Motor neuron (in vitro differentiated cells): ENCODE measurements at regions of chr5 and their contacts with region 1.

Region 1: DNA sequence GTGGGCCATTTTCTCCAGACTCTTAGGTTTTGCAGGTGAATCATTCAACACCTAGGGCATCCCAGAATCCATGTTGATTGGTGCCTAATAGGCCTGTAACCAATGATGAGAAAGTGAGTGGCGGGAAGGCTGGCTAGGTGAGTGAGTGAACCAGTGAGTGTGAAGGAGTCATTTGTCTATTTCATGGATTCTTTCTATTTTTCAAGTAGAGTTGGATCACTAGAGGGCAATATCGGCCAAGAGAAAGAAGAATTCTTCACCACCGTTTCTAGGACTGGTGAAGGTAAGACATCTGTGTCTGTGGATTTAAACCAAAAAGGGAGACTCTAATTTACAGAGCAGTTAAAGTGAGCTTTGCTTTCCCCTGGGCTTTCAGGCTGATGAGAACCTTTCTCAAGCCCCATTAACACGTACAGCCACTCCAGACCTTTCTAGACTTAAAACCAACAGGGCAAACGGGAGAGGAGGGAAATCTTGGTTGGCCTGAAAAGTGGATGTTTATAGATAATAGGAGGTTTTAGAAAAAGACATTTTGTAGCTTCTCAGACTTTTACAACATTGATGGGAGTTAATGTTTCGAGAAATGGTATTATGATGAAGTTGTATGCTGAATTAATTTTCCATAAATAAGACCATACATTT is 114.3 kb upstream of the IL12B start:
- ATAC-seq: peak; percentile 45 to 73 (median 56)
- H3K4me3 ChIP-seq: no peak overlapping the region
- H3K27ac ChIP-seq: no peak overlapping the region
- H3K4me1 ChIP-seq: peaks cover 6% of the 10 kb centered on the region in 2 donors

Region 2: DNA sequence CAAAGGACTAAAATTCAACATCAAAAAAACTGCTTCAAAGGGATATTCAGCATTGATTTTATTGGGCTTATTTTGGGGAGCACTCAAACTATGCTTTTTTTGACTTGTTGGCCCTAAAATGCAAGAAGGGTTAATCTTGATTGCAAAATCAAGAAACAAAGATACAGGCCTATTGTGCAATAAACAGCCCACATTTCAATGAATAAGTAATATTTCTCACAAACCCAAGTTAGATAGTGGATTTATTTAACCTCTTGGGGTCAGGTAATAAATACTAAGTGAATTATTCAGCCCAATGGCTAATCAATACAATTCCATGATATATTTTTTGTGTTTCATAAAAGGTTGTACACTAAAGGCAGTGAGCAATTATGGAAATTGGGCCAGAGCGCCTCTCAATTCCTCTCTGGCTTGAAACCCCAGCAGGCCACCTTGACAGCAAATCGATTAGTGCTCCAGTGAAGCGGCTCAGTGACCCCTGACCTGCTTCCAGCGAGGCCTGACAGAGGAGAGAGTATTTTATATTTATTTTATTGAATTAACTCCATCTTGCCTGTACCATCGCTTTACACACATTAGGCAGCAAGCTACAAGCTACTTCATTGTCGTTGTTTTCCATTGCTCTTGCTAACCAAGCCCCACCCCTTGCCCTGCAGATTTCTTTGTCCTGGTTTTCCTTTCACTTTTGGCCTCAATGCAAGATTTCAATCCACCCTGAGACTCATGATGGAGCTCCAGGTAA is 410.3 kb before region 1 on chr5:
- in situ Hi-C with region 1: no loop called
- ATAC-seq: peak in 7 of 8 experiments; percentile 45 to 96 (median 93)
- H3K4me3 ChIP-seq: no peak overlapping the region
- H3K27ac ChIP-seq: peak overlapping the region; percentile 45 to 85
- H3K4me1 ChIP-seq: peaks cover 38 to 43% of the 10 kb centered on the region in 2 donors

Region 3: DNA sequence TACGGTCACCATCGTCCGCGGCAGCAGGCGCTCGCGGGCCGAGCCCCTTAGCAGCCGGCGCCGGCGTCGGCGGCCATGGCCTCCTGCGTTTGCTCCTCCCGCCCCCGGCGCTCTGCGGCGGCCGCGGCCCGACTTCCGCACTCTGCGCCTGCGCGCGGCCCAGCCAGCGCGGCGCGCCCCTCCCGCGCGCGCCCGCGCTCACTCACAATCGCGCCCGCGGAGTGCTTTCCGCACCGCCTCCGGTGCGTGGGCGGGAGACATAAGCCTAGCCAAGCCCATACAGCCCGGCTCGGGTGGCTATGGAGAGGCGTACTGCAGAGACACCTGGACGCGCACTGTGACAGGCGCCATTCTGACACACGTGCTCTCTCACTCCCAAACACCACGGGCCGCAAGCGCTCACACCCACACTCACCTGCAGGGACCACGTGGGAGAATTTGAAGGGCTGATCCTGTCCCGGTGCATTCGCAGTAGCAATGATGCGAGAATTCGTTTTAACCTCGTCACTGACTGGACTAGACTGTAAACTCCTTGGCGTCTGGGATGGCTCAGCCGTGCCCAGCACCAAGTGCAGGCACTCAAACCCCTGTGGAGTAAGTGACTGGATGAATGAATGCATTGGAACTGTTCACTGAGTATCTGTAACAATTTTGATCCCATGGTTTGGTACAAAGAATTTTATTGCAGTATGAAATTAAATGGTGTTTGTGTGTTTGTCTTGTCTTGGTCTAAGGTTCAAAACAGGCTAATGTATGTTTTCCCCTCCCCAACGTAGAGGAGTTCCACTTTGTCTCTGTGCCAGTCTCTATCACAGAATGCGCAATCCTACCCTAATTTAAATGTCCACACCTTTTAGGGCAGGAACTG is 234.9 kb before region 1 on chr5 and contains the start of gene RNF145:
- in situ Hi-C with region 1: no loop called
- ATAC-seq: peak; percentile 64 to 86 (median 80)
- H3K4me3 ChIP-seq: peak within 1 kb of the TSS; percentile 78 to 96 (median 95)
- H3K27ac ChIP-seq: peak within 1 kb of the TSS; percentile 91 to 93
- H3K4me1 ChIP-seq: peaks cover 5 to 25% of the 10 kb centered on the region in 2 donors
- total RNA-seq, gene RNF145: 41.0 to 88.5 (median 49.1) TPM

Region 4: GRCh38 chr5:159915904-159916840 is 471.6 kb after region 1 on chr5 and contains the start of gene ADRA1B:
- in situ Hi-C with region 1: loop called in 1 of 9 experiments (anchors 10 kb)
- ATAC-seq: peak; percentile 87 to 98 (median 94)
- H3K4me3 ChIP-seq: peak within 1 kb of the TSS; percentile 33 to 46 (median 44)
- H3K27ac ChIP-seq: no peak within 1 kb of the TSS
- H3K4me1 ChIP-seq: peaks cover 16 to 36% of the 10 kb centered on the region in 2 donors
- total RNA-seq, gene ADRA1B: 0.25 to 4.8 (median 0.57) TPM in 7 of 8 experiments, not detected in the other

Region 5: GRCh38 chr5:159965031-159965837 is 520.7 kb after region 1 on chr5:
- in situ Hi-C with region 1: loop called in 1 of 9 experiments (anchors 25 kb)
- ATAC-seq: peak; percentile 40 to 94 (median 62)
- H3K4me3 ChIP-seq: no peak overlapping the region
- H3K27ac ChIP-seq: no peak overlapping the region
- H3K4me1 ChIP-seq: no peaks in the 10 kb centered on the region

Region 6: GRCh38 chr5:159987031-159987674 is 542.6 kb after region 1 on chr5:
- in situ Hi-C with region 1: loop called in 5 of 9 experiments (anchors 10 to 25 kb)
- ATAC-seq: peak; percentile 96 to 100 (median 99)
- H3K4me3 ChIP-seq: peak overlapping the region; percentile 25 to 39 (median 33)
- H3K27ac ChIP-seq: no peak overlapping the region
- H3K4me1 ChIP-seq: no peaks in the 10 kb centered on the region